ENCODE measurements at regions of chr4 and their contacts with region 1.

Region 1: DNA sequence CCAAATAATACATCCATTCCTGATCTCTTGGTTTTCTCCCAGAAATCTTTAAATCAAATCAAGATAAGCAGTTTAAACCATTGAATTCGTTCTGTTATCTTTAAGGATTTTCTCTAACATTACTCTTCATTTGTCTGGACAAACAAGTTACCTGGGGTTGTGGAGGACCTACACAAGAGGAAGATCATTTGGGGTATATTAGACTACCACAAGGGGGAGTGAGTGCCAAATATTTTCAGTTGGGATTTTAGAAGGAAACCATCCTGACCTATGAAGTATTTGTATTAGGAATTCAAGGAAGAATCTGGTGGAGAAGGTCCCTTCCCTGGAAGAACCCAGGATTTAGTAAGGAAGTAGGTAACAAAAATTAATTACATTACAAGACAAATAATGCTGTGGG is 12.0 kb upstream of the DCHS2 start:
- DNase-seq: no peak
- ATAC-seq: no peak
- H3K4me3 ChIP-seq: no peak overlapping the region
- H3K27ac ChIP-seq: no peak overlapping the region
- H3K4me1 ChIP-seq: no peaks in the 10 kb centered on the region
- H3K27me3 ChIP-seq: no peaks in the 10 kb centered on the region
- CTCF ChIP-seq: no peak
- POLR2A ChIP-seq: no peak

Region 2: DNA sequence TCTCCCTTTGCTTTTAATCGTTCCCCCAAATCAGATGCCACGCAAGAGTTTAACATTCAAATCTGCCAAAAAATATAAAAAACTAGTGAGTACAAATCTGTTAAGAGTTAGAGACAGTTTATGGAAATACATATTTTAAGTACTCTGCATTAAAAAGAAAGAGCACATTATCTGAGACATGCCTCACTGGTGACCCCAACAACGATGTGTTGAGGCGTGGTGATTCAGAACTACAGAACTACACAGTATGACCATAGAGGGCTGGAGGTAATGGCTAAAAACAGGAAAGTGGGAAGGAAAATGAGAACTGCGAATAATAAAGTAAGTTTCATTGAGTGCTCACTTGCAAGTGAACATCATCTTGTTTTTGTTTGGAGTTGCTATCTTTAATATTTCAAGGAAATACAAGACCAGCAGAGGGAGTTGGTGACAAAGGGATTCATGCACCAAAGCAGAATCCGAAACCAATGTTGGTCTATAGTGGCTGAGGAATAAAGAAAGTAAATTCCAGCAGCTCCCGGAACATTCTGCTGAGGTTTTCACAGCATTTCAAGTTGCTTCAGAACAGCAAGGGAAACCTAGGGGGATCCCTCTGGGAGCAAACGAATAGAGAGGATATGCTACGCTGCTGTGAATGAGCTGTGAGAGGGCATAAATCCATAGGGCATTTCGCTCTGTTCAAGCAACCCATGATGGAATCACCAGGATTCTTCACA is 104.2 kb before region 1 on chr4:
- in situ Hi-C with region 1: loop called in 1 of 4 experiments (anchors 5 kb)
- intact Hi-C with region 1: no loop called
- DNase-seq: no peak
- ATAC-seq: peak; percentile 36 to 42
- H3K4me3 ChIP-seq: peak overlapping the region in 3 of 4 donors; percentile 25 to 31 (median 27)
- H3K27ac ChIP-seq: peak overlapping the region in 2 of 4 donors; percentile 10 to 31
- H3K4me1 ChIP-seq: no peaks in the 10 kb centered on the region
- H3K27me3 ChIP-seq: no peaks in the 10 kb centered on the region
- CTCF ChIP-seq: peak in 2 of 5 experiments; percentile 17 to 20
- POLR2A ChIP-seq: no peak